ENCODE measurements at regions of chr14 and their contacts with region 1.

Region 1: GRCh38 chr14:35776823-35777222 is 32.3 kb downstream of the RALGAPA1 start:
- DNase-seq: no peak
- H3K4me3 ChIP-seq: no peak overlapping the region
- CTCF ChIP-seq: no peak
- POLR2A ChIP-seq: no peak

Region 2: DNA sequence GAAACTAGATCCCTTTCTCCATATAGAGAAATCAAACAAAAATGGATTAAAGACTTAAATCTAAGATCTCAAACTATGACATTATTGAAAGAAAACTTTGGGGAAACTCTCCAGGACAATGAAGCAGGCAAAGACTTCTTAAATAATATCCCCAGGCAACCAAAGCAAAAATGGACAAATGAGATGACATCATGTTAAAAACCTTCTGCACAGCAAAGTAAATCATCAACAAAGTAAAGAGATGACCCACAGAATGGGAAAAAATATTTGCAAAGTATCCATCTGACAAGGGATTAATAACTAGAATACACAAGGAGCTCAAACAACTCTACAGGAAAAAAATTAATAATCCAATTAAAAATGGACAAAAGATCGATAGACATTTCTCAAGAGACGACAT is 68.8 kb before region 1 on chr14:
- intact Hi-C with region 1: no loop called
- DNase-seq: no peak
- H3K4me3 ChIP-seq: no peak overlapping the region
- CTCF ChIP-seq: no peak
- POLR2A ChIP-seq: no peak

Region 3: GRCh38 chr14:35944847-35945246 is 168.0 kb after region 1 on chr14:
- intact Hi-C with region 1: loop called (anchors 5 kb)
- DNase-seq: no peak
- H3K4me3 ChIP-seq: no peak overlapping the region
- CTCF ChIP-seq: no peak
- POLR2A ChIP-seq: no peak

Region 4: GRCh38 chr14:35956376-35957085 is 179.7 kb after region 1 on chr14:
- intact Hi-C with region 1: no loop called
- DNase-seq: no peak
- H3K4me3 ChIP-seq: no peak overlapping the region
- CTCF ChIP-seq: no peak
- POLR2A ChIP-seq: no peak

Region 5: DNA sequence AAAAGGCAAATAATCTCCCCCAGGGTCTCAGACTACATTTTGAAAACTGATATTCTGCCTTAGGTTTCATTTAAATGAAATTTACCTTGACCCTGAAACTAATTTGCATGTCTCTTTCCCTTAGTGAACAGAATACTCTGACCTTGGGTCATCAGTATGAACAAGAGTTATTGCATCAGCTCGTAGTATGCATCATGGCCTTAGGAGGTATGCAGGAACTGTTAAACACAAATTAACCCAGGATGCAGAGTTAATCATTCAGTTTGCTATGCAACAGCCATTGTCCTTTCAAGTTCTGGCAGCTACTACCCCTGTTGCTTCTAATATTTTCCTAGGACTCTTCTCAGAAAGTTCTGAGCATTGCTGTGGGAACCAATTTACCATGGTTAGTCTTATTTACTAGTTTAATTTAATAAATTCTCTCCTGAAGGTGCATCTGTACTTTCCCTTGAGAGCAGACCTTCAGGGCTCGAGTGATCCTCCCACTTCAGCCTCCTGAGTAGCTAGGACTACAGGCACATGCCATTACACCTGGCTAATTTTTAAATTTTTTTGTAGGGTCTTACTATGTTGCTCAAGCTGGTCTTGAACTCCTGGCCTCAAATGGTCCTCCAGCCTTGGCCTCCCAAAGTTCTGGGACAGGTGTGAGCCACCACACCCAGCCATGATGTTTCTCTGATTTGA is 1945.3 kb after region 1 on chr14:
- intact Hi-C with region 1: no loop called
- DNase-seq: no peak
- H3K4me3 ChIP-seq: no peak overlapping the region
- CTCF ChIP-seq: peak in 1 of 3 donors; percentile 22
- POLR2A ChIP-seq: no peak

Measured in lower leg skin (tissue), 4 donors.